ENCODE measurements at regions of chr17 and their contacts with region 1.

Region 1: GRCh38 chr17:57243171-57243948 is 13.0 kb upstream of the MSI2 start:
- DNase-seq: peak; percentile 21
- H3K4me3 ChIP-seq: no peak overlapping the region
- H3K27ac ChIP-seq: no peak overlapping the region
- H3K27me3 ChIP-seq: peaks cover 17% of the 10 kb centered on the region
- CTCF ChIP-seq: peak; percentile 100

Region 2: DNA sequence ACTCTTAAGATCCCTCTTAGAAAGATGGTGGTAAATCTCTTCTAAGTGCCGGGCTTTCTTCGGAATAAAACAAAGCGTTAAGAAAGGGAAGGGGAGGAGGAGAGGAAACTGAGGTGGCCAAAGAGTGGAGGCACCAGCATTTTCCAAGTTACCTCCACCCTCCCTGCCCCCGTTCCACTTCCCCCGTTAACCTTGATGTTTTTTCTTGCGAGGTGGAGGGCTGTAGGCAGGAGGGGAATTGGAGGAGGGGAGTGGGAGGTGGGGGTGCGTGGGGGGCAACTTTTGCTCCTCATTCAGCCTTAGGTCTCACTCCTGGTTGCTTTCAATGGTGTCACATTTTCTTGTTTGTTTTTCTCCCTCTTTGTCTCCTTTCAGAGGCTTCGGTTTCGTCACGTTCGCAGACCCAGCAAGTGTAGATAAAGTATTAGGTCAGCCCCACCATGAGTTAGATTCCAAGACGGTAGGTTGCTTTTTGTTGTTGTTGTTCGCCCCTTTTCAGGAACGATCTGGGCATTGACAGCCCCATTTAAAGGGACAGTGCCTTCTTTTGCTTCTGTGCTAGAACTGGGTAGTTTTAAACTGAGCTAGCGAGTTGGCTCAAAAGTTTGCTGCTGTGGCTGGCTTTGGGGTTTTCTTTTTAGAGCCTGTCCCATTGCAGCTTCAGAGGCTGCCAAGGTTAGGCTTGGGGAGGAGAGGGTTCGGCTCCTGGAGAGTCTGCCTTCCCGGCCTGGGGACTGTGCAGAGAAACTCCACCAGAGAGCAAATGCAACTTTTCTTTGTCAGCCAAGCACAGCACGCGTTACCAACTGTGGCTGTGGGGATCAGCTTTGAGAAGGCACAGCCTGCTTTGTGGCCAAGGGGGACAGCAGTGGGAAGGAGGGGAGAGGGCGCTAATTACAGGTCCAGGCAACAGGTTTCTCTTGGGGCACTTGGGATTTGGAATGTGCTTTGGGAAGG is 14.8 kb after region 1 on chr17:
- CTCF ChIA-PET with region 1: interaction called, 34 read pairs
- POLR2A ChIA-PET with region 1: no interaction called
- DNase-seq: no peak
- H3K4me3 ChIP-seq: peak overlapping the region; percentile 71
- H3K27ac ChIP-seq: no peak overlapping the region
- H3K27me3 ChIP-seq: no peaks in the 10 kb centered on the region
- CTCF ChIP-seq: no peak

Region 3: GRCh38 chr17:57577751-57578607 is 334.6 kb after region 1 on chr17:
- CTCF ChIA-PET with region 1: interaction called, 44 read pairs
- POLR2A ChIA-PET with region 1: interaction called, 4 read pairs
- DNase-seq: peak; percentile 38
- H3K4me3 ChIP-seq: peak overlapping the region; percentile 47
- H3K27ac ChIP-seq: peak overlapping the region; percentile 40
- H3K27me3 ChIP-seq: no peaks in the 10 kb centered on the region
- CTCF ChIP-seq: no peak

Region 4: GRCh38 chr17:57622683-57623433 is 379.5 kb after region 1 on chr17:
- CTCF ChIA-PET with region 1: interaction called, 23 read pairs
- POLR2A ChIA-PET with region 1: no interaction called
- DNase-seq: no peak
- H3K4me3 ChIP-seq: no peak overlapping the region
- H3K27ac ChIP-seq: peak overlapping the region; percentile 52
- H3K27me3 ChIP-seq: no peaks in the 10 kb centered on the region
- CTCF ChIP-seq: no peak

Region 5: DNA sequence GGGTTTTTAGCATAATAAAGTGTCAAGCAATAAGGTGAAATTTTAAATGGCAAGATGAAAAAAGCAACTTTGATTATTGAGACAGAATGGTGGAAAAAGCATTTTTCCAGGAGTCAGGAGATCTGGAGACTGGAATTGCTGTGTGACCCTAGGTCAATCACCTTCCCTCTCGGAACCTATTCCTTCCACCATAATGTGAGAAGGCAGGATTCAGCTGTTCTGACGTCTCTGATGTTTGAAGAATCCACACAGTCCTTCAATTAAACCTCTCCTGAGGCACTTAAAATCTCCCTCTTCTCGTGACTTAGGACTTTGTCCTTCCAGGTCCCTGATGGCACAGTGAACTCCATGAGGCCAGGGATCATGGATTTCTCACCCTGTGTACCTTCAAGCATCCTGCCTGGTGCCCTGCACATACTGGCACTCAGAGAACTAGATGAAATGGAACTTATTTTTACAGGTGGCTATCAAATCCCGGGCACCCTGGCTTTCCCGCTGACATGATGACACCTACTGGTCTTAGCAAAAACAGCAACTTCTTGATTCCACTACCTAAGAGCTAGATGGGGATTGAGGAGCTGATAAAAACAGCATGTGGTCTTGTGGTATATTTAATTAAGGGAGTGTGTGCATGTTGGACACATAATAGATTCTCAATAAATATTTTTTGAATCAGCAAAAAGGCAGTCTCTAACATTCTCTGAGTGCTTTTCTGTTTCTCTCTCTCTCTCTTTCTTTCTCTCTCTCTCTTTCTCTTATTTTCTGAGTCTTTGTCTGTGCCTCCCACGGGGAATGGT is 504.1 kb after region 1 on chr17:
- CTCF ChIA-PET with region 1: interaction called, 64 read pairs
- POLR2A ChIA-PET with region 1: no interaction called
- DNase-seq: peak; percentile 33
- H3K4me3 ChIP-seq: no peak overlapping the region
- H3K27ac ChIP-seq: no peak overlapping the region
- H3K27me3 ChIP-seq: peaks cover 26% of the 10 kb centered on the region
- CTCF ChIP-seq: peak; percentile 91

Region 6: GRCh38 chr17:57833179-57833939 is 590.0 kb after region 1 on chr17:
- CTCF ChIA-PET with region 1: interaction called, 44 read pairs
- POLR2A ChIA-PET with region 1: no interaction called
- DNase-seq: peak; percentile 30
- H3K4me3 ChIP-seq: peak overlapping the region; percentile 59
- H3K27ac ChIP-seq: no peak overlapping the region
- H3K27me3 ChIP-seq: no peaks in the 10 kb centered on the region
- CTCF ChIP-seq: peak; percentile 94